ENCODE measurements at regions of chr6 and their contacts with region 1.

Region 1: DNA sequence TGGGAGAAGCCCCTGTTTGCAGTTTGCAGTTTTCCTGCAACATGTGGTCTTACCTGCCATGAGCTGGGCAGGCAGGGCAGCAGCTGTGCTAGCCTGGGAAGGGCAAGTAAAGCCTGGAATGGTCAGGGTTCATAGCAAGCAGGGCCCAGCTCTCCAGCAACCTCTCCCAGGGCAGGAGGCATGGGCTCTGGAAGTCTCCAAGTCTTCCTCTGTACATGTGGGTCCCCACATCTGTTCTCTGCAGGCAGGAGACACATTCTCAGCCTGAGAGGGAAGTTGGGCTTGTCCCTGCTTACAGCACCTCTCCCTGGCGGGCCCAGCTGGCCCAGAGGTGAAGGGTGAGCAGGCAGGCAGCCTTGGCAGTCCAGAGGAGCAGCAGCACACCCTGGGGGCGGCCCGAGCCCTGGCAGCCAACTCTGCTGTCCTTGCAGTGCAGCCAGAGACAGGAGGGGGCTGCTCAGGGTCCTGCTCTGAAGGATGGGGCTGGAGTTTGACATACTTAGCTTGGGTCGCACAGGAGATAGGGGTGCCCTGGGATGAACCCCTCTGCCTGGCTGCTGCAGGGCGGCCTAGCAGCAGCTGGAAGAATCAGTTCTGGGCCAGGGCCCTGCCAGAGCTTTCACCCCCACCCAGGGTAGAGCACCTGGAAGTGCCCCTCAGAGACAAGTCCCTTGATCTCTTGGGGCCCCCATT is 176.0 kb downstream of the MRPL14 start:
- DNase-seq: peak; percentile 71 to 94 (median 81)
- ATAC-seq: peak; percentile 93 to 97 (median 96)
- H3K4me3 ChIP-seq: no peak overlapping the region
- H3K27ac ChIP-seq: no peak overlapping the region
- H3K4me1 ChIP-seq: no peaks in the 10 kb centered on the region
- H3K27me3 ChIP-seq: no peaks in the 10 kb centered on the region
- CTCF ChIP-seq: peak in 3 of 4 donors; percentile 60 to 65 (median 63)

Region 2: GRCh38 chr6:43769526-43770416 is 181.4 kb before region 1 on chr6 and contains the start of gene VEGFA:
- intact Hi-C with region 1: loop called in 2 of 3 experiments (anchors 5 to 10 kb)
- DNase-seq: peak; percentile 81 to 99 (median 92)
- ATAC-seq: peak; percentile 59 to 76 (median 68)
- H3K4me3 ChIP-seq: peak within 1 kb of the TSS; percentile 76 to 96 (median 87)
- H3K27ac ChIP-seq: peak within 1 kb of the TSS; percentile 92 to 100 (median 96)
- H3K4me1 ChIP-seq: peaks cover 8 to 11% (median 8%) of the 10 kb centered on the region in 3 donors
- H3K27me3 ChIP-seq: no peaks in the 10 kb centered on the region
- CTCF ChIP-seq: peak; percentile 87 to 94 (median 92)
- total RNA-seq, gene VEGFA: 55.2 to 127 (median 90.0) TPM

Region 3: GRCh38 chr6:43838276-43839036 is 112.8 kb before region 1 on chr6:
- intact Hi-C with region 1: loop called in 1 of 3 experiments (anchors 10 kb)
- DNase-seq: peak in 5 of 6 donors; percentile 43 to 68 (median 57)
- ATAC-seq: peak; percentile 64 to 79 (median 71)
- H3K4me3 ChIP-seq: no peak overlapping the region
- H3K27ac ChIP-seq: peak overlapping the region in 3 of 4 donors; percentile 32 to 50 (median 39)
- H3K4me1 ChIP-seq: peaks cover 13 to 32% (median 30%) of the 10 kb centered on the region in 3 donors
- H3K27me3 ChIP-seq: no peaks in the 10 kb centered on the region
- CTCF ChIP-seq: peak; percentile 27 to 66 (median 54)

Region 4: DNA sequence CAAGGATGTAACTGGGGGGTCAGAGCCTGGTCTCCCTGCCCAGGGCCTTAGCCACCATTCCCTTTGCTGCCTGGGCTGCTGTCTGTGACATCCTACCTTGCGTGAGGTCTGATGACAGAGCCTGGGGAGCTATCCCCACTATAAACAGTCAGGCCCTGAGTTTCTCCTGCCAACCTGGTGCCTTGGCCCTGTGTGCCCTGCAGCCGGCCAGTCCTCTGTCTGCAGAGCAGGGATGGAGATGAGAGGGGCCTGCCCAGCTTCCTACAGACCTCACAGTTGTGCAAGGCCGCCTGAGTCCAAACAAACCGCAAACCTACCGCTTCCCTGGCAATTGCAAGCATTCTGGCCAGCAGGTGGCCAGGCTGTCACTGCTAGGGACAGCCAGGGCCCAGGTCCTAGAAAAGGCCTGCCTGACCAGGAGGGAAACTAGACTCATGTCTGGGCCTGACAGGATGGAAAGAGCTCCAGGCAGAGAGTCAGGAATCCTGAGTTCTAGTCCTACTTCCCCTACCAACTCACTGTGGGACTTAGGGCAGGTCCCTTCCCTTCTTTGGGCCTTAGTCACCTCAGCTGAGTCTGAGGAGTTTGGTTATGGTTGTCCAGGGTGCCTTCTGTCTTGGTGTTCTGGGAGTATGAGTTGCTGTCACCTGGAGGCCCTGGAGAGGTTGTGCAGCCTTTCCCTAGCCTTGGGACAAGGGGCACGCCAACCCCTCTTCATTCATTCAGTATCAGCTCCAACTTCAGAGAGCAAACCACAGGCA is 95.0 kb before region 1 on chr6:
- intact Hi-C with region 1: loop called in 1 of 3 experiments (anchors 5 kb)
- DNase-seq: peak; percentile 51 to 79 (median 72)
- ATAC-seq: peak; percentile 82 to 93 (median 88)
- H3K4me3 ChIP-seq: no peak overlapping the region
- H3K27ac ChIP-seq: no peak overlapping the region
- H3K4me1 ChIP-seq: no peaks in the 10 kb centered on the region
- H3K27me3 ChIP-seq: no peaks in the 10 kb centered on the region
- CTCF ChIP-seq: peak; percentile 25 to 56 (median 38)

Region 5: DNA sequence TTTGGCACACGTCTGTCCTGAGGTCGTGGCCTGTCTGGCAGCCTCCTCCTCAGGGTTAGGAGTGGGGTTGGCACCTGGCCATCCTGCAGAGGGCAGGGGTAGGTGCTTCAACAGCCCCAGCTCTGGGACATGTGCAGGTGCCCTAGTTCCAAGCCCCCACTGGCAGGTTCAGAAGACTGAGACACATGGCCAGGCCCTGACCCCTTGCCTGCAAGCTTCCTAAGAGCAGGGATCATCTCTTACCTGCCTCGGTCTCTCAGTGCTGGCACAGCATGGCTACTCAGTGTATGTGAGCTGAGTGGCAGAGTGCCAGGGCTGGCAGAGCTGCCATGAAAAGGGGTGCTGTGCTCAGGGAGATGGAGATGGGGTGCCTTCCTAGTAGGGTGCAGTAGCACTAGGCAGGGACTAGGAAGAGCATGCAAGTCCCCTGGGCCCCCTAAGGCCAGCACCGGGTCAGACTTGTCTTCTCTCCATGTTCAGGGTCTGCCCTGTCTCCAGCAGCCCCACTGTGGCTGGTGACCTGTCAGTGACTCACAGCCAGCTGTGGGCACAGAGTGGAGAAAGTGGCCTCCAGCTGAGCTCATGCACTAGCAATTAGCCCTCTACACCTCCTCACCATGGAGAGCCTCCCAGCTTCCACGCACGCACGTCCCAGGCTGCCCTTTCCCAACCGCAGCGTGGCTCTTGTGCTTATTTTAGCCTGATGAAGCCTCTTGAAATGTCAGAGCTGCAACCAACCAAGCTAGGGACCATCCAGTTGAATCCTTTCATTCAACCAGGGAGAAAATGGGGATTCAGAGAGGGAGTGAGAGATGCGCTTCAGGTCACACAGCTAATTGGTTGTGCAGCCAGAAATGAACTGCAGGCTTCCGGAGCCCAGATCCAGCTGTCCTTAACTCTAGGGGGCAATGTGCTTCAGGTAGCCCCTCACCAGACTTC is 59.5 kb after region 1 on chr6:
- intact Hi-C with region 1: no loop called
- DNase-seq: peak in 2 of 6 donors; percentile 15 to 22
- ATAC-seq: peak in 3 of 4 donors; percentile 46 to 56 (median 50)
- H3K4me3 ChIP-seq: no peak overlapping the region
- H3K27ac ChIP-seq: no peak overlapping the region
- H3K4me1 ChIP-seq: no peaks in the 10 kb centered on the region
- H3K27me3 ChIP-seq: no peaks in the 10 kb centered on the region
- CTCF ChIP-seq: no peak

Region 6: DNA sequence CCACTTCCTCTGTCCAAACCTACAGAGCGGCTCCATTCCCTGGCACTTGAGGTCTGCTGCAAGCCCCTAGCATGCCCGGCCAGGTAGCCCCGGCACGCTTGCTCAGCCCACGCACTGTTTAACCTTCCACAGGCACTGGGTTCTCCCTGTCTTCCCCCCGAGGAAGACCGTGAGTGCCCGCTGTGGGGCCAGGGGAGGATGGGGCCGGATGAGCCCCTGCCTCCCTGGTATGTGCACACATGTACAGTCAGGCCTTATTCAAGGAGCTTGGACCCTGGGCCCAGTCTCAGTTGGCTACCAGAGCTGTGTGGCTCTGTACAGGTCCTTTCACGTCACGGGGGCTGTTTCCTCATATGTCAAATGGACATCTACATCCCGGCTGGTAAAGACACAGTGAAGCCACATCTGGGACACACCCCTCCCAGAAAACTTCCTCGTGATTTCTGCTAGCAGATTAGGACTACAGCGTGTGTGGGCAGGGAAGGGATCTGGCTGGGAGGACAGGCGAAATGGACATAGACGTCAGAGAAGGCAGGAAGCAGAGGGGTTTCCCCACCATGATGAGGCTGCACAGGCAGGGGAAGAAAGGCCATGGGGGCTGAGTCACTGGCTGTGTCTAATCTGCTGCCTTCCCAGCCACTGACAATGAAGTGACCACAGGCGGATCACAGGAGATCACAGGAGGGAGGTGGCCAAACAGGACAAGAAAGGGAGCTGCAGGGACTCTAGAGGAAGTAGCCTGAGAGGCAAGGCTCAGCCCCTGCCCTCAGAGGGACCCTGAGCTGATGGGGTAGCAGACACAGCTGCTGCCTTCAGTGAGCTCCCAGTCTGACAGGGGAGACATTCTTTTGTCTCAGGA is 113.1 kb after region 1 on chr6:
- intact Hi-C with region 1: loop called in 1 of 3 experiments (anchors 10 kb)
- DNase-seq: peak in 2 of 6 donors; percentile 20 to 68
- ATAC-seq: peak in 3 of 4 donors; percentile 63 to 80 (median 79)
- H3K4me3 ChIP-seq: no peak overlapping the region
- H3K27ac ChIP-seq: no peak overlapping the region
- H3K4me1 ChIP-seq: no peaks in the 10 kb centered on the region
- H3K27me3 ChIP-seq: no peaks in the 10 kb centered on the region
- CTCF ChIP-seq: no peak